ENCODE measurements at regions of chr7 and their contacts with region 1.

Region 1: DNA sequence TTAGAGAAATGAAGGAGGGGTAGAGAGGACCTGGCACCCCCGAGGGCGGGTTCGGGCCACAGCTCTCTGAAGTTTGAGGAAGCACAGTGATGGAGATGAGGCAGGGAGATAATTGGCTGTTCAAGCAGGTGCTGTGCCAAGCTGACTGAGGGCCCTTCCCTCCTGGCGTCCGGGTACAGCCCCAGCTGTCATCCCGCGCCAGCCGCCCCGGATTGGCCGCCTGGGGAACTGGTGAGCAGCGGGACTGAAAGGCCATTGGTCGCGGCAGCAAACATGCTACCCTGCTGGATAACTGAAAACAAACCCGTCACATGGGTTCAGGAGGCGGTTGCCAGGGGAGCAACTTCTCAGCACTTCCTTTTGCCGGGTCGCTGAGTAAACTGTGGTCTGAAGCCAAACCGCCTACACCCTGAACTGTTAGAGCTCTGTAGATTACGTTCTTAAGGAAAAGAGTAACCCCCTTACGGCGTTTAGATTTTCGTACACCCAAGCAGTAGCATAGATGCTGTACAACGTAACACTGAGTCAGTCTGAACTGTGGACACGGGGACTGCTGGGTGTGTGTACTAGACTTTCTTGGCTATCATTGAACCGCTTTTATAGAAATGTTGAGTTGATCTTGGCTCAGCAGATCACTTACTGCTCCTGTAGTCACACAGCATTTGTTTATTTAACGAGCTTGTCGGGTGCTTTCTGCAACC is 1.3 kb downstream of the INSIG1 start:
- DNase-seq: peak; percentile 98
- ATAC-seq: peak; percentile 69
- H3K4me3 ChIP-seq: peak overlapping the region; percentile 55
- H3K27ac ChIP-seq: no peak overlapping the region
- H3K4me1 ChIP-seq: peaks cover 4% of the 10 kb centered on the region
- H3K27me3 ChIP-seq: no peaks in the 10 kb centered on the region
- CTCF ChIP-seq: no peak
- POLR2A ChIP-seq: peak; percentile 55
- RAD21 ChIP-seq: no peak

Region 2: DNA sequence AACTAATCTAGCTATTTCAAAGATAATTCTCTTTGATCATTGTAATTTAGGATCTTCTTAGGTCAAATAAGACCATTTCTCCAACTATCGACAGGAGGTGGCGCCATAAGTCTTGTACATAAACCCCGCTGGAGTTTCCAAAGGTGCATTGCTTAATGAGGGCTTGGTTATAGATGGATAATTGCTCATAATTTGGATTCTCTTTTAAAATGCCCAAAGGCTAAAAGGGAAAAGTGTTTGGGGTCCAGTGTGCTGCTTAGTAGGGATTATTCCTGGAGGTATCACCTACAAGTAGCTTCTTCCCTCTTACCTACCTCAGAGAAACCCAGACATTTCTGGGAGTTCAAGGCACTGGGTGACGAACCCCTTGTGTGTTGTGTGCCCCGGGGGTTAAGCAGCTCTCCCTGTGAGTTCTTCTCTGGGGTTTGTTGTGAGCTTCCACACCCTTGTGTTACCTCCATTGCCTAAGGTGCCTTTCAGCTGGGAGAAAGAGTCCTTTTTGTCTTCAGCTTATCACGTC is 371.3 kb before region 1 on chr7:
- CTCF ChIA-PET with region 1: interaction called, 3 read pairs
- POLR2A ChIA-PET with region 1: no interaction called
- dilution Hi-C with region 1: no loop called
- in situ Hi-C with region 1: no loop called
- intact Hi-C with region 1: loop called (anchors 1 kb)
- DNase-seq: peak; percentile 87
- ATAC-seq: peak; percentile 48
- H3K4me3 ChIP-seq: peak overlapping the region; percentile 42
- H3K27ac ChIP-seq: peak overlapping the region; percentile 51; the same call in 1 of the 2 replicates
- H3K4me1 ChIP-seq: 0 out of 2 replicates have a peak, but pooled peaks cover 2% of the 10 kb centered on the region
- H3K27me3 ChIP-seq: no peaks in the 10 kb centered on the region
- CTCF ChIP-seq: peak; percentile 72
- POLR2A ChIP-seq: no peak
- RAD21 ChIP-seq: peak; percentile 78

Region 3: GRCh38 chr7:155069992-155070751 is 228.8 kb before region 1 on chr7 and contains the start of gene HTR5A:
- CTCF ChIA-PET with region 1: no interaction called
- POLR2A ChIA-PET with region 1: no interaction called
- dilution Hi-C with region 1: no loop called
- in situ Hi-C with region 1: no loop called
- intact Hi-C with region 1: loop called (anchors 5 kb)
- DNase-seq: peak; percentile 80
- ATAC-seq: peak; percentile 100
- H3K4me3 ChIP-seq: no peak within 1 kb of the TSS
- H3K27ac ChIP-seq: no peak within 1 kb of the TSS
- H3K4me1 ChIP-seq: no peaks in the 10 kb centered on the region
- H3K27me3 ChIP-seq: no peaks in the 10 kb centered on the region
- CTCF ChIP-seq: no peak
- POLR2A ChIP-seq: no peak
- RAD21 ChIP-seq: peak; percentile 33
- total RNA-seq, gene HTR5A: not detected in 2 replicates

Region 4: GRCh38 chr7:155205368-155206317 is 93.3 kb before region 1 on chr7:
- CTCF ChIA-PET with region 1: interaction called, 3 read pairs
- POLR2A ChIA-PET with region 1: no interaction called
- dilution Hi-C with region 1: no loop called
- in situ Hi-C with region 1: loop called (anchors 5 kb)
- intact Hi-C with region 1: loop called (anchors 1 kb)
- DNase-seq: peak; percentile 99
- ATAC-seq: peak; percentile 95
- H3K4me3 ChIP-seq: no peak overlapping the region
- H3K27ac ChIP-seq: peak overlapping the region; percentile 63
- H3K4me1 ChIP-seq: peaks cover 5% of the 10 kb centered on the region; the same call in 1 of the 2 replicates
- H3K27me3 ChIP-seq: no peaks in the 10 kb centered on the region
- CTCF ChIP-seq: no peak
- POLR2A ChIP-seq: no peak; the same call in 1 of the 2 replicates
- RAD21 ChIP-seq: peak; percentile 20; the same call in 1 of the 2 replicates

Region 5: GRCh38 chr7:155344600-155345433 is 45.8 kb after region 1 on chr7:
- CTCF ChIA-PET with region 1: interaction called, 3 read pairs
- POLR2A ChIA-PET with region 1: no interaction called
- dilution Hi-C with region 1: no loop called
- in situ Hi-C with region 1: no loop called
- intact Hi-C with region 1: loop called (anchors 2 kb)
- DNase-seq: peak; percentile 64
- ATAC-seq: peak; percentile 99
- H3K4me3 ChIP-seq: peak overlapping the region; percentile 36
- H3K27ac ChIP-seq: no peak overlapping the region
- H3K4me1 ChIP-seq: no peaks in the 10 kb centered on the region
- H3K27me3 ChIP-seq: peaks cover 4% of the 10 kb centered on the region
- CTCF ChIP-seq: peak; percentile 94
- POLR2A ChIP-seq: no peak
- RAD21 ChIP-seq: peak; percentile 82

Measured in IMR-90 (cell line).